ENCODE measurements at regions of chrX and their contacts with region 1.

Region 1: DNA sequence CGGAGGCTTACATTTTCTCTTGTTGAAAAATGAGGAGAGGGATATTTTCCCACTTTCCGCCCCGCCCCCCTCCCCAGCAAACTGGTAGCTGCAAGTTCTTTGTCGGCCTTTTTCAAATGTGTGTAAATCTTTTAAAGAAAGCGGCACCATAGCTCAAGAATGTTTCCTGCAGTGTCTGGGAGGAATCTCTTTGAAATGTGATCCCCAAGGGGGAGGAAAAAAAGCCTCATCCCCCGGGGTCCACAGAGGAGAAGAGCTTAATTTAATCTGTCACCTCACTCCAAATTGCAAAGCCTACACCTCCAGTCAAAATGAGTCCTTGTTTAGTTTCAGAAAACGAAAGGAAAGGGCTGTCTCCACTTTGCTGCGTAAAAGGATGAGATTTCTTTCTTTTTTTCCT is 34.8 kb downstream of the ASMT start:
- DNase-seq: no peak
- ATAC-seq: no peak
- H3K4me3 ChIP-seq: no peak overlapping the region
- H3K4me3 Mint-ChIP-seq: no peak overlapping the region
- H3K27ac ChIP-seq: no peak overlapping the region
- H3K27ac Mint-ChIP-seq: no peak overlapping the region
- H3K4me1 ChIP-seq: peaks cover 0 to 7% of the 10 kb centered on the region in 2 donors
- H3K4me1 Mint-ChIP-seq: peaks cover 10% of the 10 kb centered on the region
- H3K27me3 ChIP-seq: peaks cover 0 to 13% (median 2%) of the 10 kb centered on the region in 4 experiments
- H3K27me3 Mint-ChIP-seq: peaks cover 8% of the 10 kb centered on the region
- CTCF ChIP-seq: no peak

Region 2: GRCh38 chrX:1246816-1247215 is 402.8 kb before region 1 on chrX:
- CTCF ChIA-PET with region 1: no interaction called
- POLR2A ChIA-PET with region 1: no interaction called
- intact Hi-C with region 1: loop called (anchors 5 kb)
- DNase-seq: peak; percentile 84
- ATAC-seq: peak; percentile 64
- H3K4me3 ChIP-seq: no peak overlapping the region
- H3K4me3 Mint-ChIP-seq: no peak overlapping the region
- H3K27ac ChIP-seq: no peak overlapping the region
- H3K27ac Mint-ChIP-seq: peak overlapping the region; percentile 61
- H3K4me1 ChIP-seq: peaks cover 12 to 20% of the 10 kb centered on the region in 2 donors
- H3K4me1 Mint-ChIP-seq: peaks cover 17% of the 10 kb centered on the region
- H3K27me3 ChIP-seq: no peaks in the 10 kb centered on the region
- H3K27me3 Mint-ChIP-seq: no peaks in the 10 kb centered on the region
- CTCF ChIP-seq: peak; percentile 90

Region 3: GRCh38 chrX:1546691-1547251 is 102.8 kb before region 1 on chrX:
- CTCF ChIA-PET with region 1: no interaction called
- POLR2A ChIA-PET with region 1: no interaction called
- intact Hi-C with region 1: no loop called
- DNase-seq: peak; percentile 53
- ATAC-seq: peak; percentile 49
- H3K4me3 ChIP-seq: peak overlapping the region in 3 of 5 experiments; percentile 17 to 30 (median 27)
- H3K4me3 Mint-ChIP-seq: peak overlapping the region; percentile 82
- H3K27ac ChIP-seq: peak overlapping the region; percentile 75 to 80
- H3K27ac Mint-ChIP-seq: peak overlapping the region; percentile 98
- H3K4me1 ChIP-seq: peaks cover 34 to 54% of the 10 kb centered on the region in 2 donors
- H3K4me1 Mint-ChIP-seq: peaks cover 50% of the 10 kb centered on the region
- H3K27me3 ChIP-seq: no peaks in the 10 kb centered on the region
- H3K27me3 Mint-ChIP-seq: no peaks in the 10 kb centered on the region
- CTCF ChIP-seq: no peak

Region 4: GRCh38 chrX:1609311-1610161 is 40.1 kb before region 1 on chrX:
- CTCF ChIA-PET with region 1: no interaction called
- POLR2A ChIA-PET with region 1: no interaction called
- intact Hi-C with region 1: loop called (anchors 5 kb)
- DNase-seq: no peak
- ATAC-seq: no peak
- H3K4me3 ChIP-seq: no peak overlapping the region
- H3K4me3 Mint-ChIP-seq: no peak overlapping the region
- H3K27ac ChIP-seq: no peak overlapping the region
- H3K27ac Mint-ChIP-seq: no peak overlapping the region
- H3K4me1 ChIP-seq: peaks cover 0 to 7% of the 10 kb centered on the region in 2 donors
- H3K4me1 Mint-ChIP-seq: peaks cover 4% of the 10 kb centered on the region
- H3K27me3 ChIP-seq: peaks cover 0 to under 1% (median 0%) of the 10 kb centered on the region in 4 experiments
- H3K27me3 Mint-ChIP-seq: no peaks in the 10 kb centered on the region
- CTCF ChIP-seq: no peak

Region 5: DNA sequence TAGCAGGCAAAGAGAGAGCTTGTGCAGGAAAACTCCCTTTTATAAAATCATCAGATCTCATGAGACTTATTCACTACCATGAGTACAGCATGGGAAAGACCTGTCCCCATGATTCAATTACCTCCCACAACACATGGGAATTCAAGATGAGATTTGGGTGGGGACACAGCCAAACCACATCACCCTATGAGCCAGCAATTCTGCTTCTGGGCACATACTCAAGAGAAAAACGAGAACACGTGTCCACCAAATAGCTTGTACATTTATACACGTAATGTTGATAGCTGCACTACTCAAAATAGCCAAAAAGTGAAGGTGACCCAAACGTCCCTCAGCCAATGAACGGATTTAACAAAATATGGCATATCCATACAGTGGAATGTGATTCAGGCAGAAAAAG is 945.6 kb after region 1 on chrX:
- CTCF ChIA-PET with region 1: no interaction called
- POLR2A ChIA-PET with region 1: no interaction called
- intact Hi-C with region 1: loop called (anchors 1 kb)
- DNase-seq: no peak
- ATAC-seq: no peak
- H3K4me3 ChIP-seq: no peak overlapping the region
- H3K4me3 Mint-ChIP-seq: no peak overlapping the region
- H3K27ac ChIP-seq: no peak overlapping the region
- H3K27ac Mint-ChIP-seq: no peak overlapping the region
- H3K4me1 ChIP-seq: no peaks in the 10 kb centered on the region
- H3K4me1 Mint-ChIP-seq: peaks cover 8% of the 10 kb centered on the region
- H3K27me3 ChIP-seq: no peaks in the 10 kb centered on the region
- H3K27me3 Mint-ChIP-seq: no peaks in the 10 kb centered on the region
- CTCF ChIP-seq: no peak

Region 6: GRCh38 chrX:2608638-2609430 is 959.2 kb after region 1 on chrX:
- CTCF ChIA-PET with region 1: no interaction called
- POLR2A ChIA-PET with region 1: no interaction called
- intact Hi-C with region 1: loop called (anchors 5 kb)
- DNase-seq: peak; percentile 90
- ATAC-seq: peak; percentile 97
- H3K4me3 ChIP-seq: peak overlapping the region; percentile 36 to 89 (median 83)
- H3K4me3 Mint-ChIP-seq: peak overlapping the region; percentile 94
- H3K27ac ChIP-seq: peak overlapping the region; percentile 43 to 58
- H3K27ac Mint-ChIP-seq: peak overlapping the region; percentile 89
- H3K4me1 ChIP-seq: peaks cover 16 to 25% of the 10 kb centered on the region in 2 donors
- H3K4me1 Mint-ChIP-seq: peaks cover 32% of the 10 kb centered on the region
- H3K27me3 ChIP-seq: no peaks in the 10 kb centered on the region
- H3K27me3 Mint-ChIP-seq: no peaks in the 10 kb centered on the region
- CTCF ChIP-seq: no peak